CD4-positive, alpha-beta memory T cell (primary cell): ENCODE measurements at regions of chr7 and their contacts with region 1.

Region 1: DNA sequence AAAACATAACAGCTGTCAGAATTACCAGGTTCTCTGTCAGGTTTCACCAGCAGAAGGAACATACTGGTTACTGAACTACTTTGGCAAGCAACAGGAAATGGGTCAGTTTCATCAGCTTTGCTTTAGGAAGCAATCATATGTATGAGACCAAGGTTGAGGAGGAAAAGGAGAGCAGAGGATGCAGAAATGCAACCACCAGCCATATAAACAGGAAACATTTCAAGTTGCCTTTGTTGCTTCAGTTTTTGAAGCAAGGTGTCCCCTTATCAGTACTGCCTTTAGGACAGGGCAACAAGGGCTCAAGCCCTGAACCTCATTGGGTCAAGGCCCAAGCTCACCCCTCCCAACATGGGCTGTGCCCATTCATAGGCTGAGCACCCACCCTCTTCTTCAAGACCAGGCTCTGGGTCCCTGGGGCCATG is 10.2 kb downstream of the HIPK2 start:
- DNase-seq: peak in 4 of 5 donors; percentile 56 to 67 (median 60)
- H3K4me3 ChIP-seq: peak overlapping the region in 1 of 2 donors; percentile 27
- H3K4me3 Mint-ChIP-seq: peak overlapping the region; percentile 0 to 93 (median 60)
- H3K27ac ChIP-seq: peak overlapping the region; percentile 56
- H3K27ac Mint-ChIP-seq: peak overlapping the region; percentile 84 to 91 (median 88)
- H3K4me1 ChIP-seq: peaks cover 58% of the 10 kb centered on the region
- H3K4me1 Mint-ChIP-seq: peaks cover 64 to 88% (median 77%) of the 10 kb centered on the region in 4 donors
- H3K27me3 ChIP-seq: no peaks in the 10 kb centered on the region
- H3K27me3 Mint-ChIP-seq: no peaks in the 10 kb centered on the region

Region 2: GRCh38 chr7:139613971-139614411 is 153.6 kb before region 1 on chr7:
- CTCF ChIA-PET with region 1: no interaction called
- POLR2A ChIA-PET with region 1: no interaction called
- intact Hi-C with region 1: no loop called
- DNase-seq: no peak
- H3K4me3 ChIP-seq: no peak overlapping the region
- H3K4me3 Mint-ChIP-seq: no peak overlapping the region
- H3K27ac ChIP-seq: no peak overlapping the region
- H3K27ac Mint-ChIP-seq: peak overlapping the region in 2 of 7 donors; percentile 40 to 66
- H3K4me1 ChIP-seq: no peaks in the 10 kb centered on the region
- H3K4me1 Mint-ChIP-seq: no peaks in the 10 kb centered on the region
- H3K27me3 ChIP-seq: no peaks in the 10 kb centered on the region
- H3K27me3 Mint-ChIP-seq: no peaks in the 10 kb centered on the region

Region 3: DNA sequence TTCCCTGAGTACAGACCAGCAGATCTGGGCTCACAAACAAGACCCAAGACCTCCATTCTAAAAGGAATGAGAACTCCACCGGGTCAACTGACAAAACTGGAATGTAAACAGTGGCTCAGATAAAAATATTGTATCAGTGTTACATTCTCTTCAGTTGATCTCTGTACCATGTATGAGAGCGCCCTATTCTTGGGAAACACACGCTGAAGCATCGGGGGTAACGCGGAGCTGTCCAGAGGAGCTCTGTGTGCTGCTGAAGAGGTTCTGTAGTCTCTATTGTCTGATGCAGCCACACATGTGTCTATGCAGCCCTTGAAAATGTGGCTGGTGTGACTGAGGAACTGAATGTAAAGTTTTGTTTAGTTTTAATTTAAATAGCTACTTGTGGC is 29.5 kb before region 1 on chr7:
- CTCF ChIA-PET with region 1: interaction called, 15 read pairs
- POLR2A ChIA-PET with region 1: interaction called, 14 read pairs
- intact Hi-C with region 1: no loop called
- DNase-seq: no peak
- H3K4me3 ChIP-seq: no peak overlapping the region
- H3K4me3 Mint-ChIP-seq: peak overlapping the region in 6 of 8 donors; percentile 23 to 75 (median 64)
- H3K27ac ChIP-seq: no peak overlapping the region
- H3K27ac Mint-ChIP-seq: peak overlapping the region; percentile 66 to 90 (median 87)
- H3K4me1 ChIP-seq: peaks cover 27% of the 10 kb centered on the region
- H3K4me1 Mint-ChIP-seq: peaks cover 42 to 73% (median 52%) of the 10 kb centered on the region in 4 donors
- H3K27me3 ChIP-seq: no peaks in the 10 kb centered on the region
- H3K27me3 Mint-ChIP-seq: no peaks in the 10 kb centered on the region

Region 4: GRCh38 chr7:139798221-139798620 is 30.6 kb after region 1 on chr7:
- CTCF ChIA-PET with region 1: no interaction called
- POLR2A ChIA-PET with region 1: no interaction called
- intact Hi-C with region 1: no loop called
- DNase-seq: no peak
- H3K4me3 ChIP-seq: no peak overlapping the region
- H3K4me3 Mint-ChIP-seq: peak overlapping the region in 4 of 8 donors; percentile 12 to 43 (median 26)
- H3K27ac ChIP-seq: no peak overlapping the region
- H3K27ac Mint-ChIP-seq: peak overlapping the region in 3 of 7 donors; percentile 22 to 63 (median 47)
- H3K4me1 ChIP-seq: no peaks in the 10 kb centered on the region
- H3K4me1 Mint-ChIP-seq: peaks cover 0 to 10% (median 9%) of the 10 kb centered on the region in 4 donors
- H3K27me3 ChIP-seq: no peaks in the 10 kb centered on the region
- H3K27me3 Mint-ChIP-seq: peaks cover 3 to 5% of the 10 kb centered on the region in 2 donors

Region 5: DNA sequence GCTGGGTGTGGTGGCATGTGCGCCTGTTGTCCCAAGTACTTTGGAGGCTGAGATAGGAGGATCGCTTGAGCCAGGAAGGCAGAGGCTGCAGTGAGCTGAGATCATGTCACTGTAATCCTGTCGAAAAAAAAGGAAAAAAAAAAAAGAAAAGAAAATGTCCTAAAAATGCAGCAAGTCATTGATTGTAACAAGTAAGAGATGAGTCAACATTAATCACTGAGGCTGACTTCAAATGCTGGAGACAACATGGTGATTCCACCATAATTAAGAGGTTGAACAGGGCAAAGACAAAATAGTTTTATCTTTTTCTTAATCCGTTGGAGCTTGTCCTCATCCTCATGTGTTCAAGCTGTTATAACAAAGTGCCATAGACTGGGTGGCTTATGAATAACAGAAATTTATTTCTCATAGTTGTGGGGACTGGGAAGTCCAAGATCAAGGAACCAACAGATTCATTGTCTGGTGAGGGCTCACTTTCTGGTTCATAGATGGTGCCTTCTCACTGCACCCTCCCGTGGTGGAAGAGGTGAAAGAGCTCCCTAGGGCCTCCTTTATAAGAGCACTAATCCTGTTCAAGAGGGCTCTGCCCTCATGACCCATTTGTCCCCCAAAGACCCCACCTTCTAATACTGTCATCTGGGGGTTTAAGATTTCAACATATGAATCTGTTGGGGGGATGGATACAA is 121.8 kb after region 1 on chr7:
- CTCF ChIA-PET with region 1: no interaction called
- POLR2A ChIA-PET with region 1: no interaction called
- intact Hi-C with region 1: no loop called
- DNase-seq: no peak
- H3K4me3 ChIP-seq: no peak overlapping the region
- H3K4me3 Mint-ChIP-seq: no peak overlapping the region
- H3K27ac ChIP-seq: no peak overlapping the region
- H3K27ac Mint-ChIP-seq: peak overlapping the region in 1 of 7 donors; percentile 19
- H3K4me1 ChIP-seq: no peaks in the 10 kb centered on the region
- H3K4me1 Mint-ChIP-seq: peaks cover 0 to 2% (median 0%) of the 10 kb centered on the region in 4 donors
- H3K27me3 ChIP-seq: no peaks in the 10 kb centered on the region
- H3K27me3 Mint-ChIP-seq: peaks cover 0 to 2% of the 10 kb centered on the region in 2 donors